SK-N-SH (cell line): ENCODE measurements at regions of chr2 and their contacts with region 1.

Region 1: DNA sequence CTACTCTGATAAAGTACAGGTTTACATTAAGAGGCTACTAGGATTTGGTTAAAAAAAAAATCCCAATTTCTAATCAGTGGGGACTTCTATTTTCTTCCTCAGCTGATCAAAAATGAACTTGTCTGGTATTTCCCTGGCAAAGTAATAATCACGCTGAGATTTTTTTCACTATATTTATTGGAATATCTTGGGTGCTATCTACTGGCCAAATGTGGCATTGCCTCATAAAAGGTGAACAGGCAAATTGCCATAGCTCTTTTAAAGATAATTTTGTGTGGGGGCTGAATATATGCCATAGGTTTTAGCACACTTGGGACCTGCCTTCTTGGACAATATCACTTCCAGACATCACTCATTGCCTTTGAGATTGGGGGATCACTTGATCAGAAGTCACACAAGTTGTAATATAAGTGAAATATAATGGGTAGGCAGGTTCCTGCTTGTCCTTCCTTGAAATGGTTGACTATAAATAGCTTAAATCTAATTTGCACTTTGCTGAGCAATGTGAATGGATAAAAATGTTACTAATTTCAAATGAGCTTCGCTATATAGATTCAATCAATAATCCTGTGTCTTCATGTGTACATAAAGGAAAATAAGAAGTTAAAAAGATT is 7.0 kb upstream of the NXPH2 start:
- DNase-seq: peak; percentile 49
- H3K4me3 ChIP-seq: peak overlapping the region in 1 of 2 experiments; percentile 30; a peak in 1 of 4 replicates
- H3K27ac ChIP-seq: no peak overlapping the region
- H3K4me1 ChIP-seq: no peaks in the 10 kb centered on the region
- H3K27me3 ChIP-seq: no peaks in the 10 kb centered on the region; the same call in 1 of the 2 replicates
- CTCF ChIP-seq: peak; percentile 83
- EP300 ChIP-seq: no peak
- RAD21 ChIP-seq: peak; percentile 90

Region 2: DNA sequence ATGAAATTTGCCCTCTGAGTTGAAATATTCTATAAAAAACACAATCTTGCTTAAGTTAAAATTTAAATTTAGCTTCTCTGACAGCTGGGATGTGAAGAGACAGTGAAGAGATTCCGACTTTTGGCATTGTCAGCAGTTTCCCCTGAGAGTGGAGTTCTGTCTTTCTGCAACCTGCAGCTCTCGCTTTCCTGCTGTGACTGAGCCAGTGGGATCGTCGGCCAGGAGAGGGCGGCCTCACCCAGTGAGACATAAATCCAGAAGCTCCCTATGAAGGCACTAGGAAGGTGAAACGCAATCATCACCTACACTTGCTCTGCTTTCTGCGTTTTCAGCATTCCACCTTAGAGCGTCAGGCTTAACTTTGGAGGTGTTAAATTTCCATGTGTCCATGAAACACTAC is 898.3 kb before region 1 on chr2:
- CTCF ChIA-PET with region 1: interaction called, 35 read pairs
- POLR2A ChIA-PET with region 1: no interaction called
- DNase-seq: peak; percentile 25
- H3K4me3 ChIP-seq: no peak overlapping the region; a peak in 1 of 4 replicates
- H3K27ac ChIP-seq: no peak overlapping the region
- H3K4me1 ChIP-seq: no peaks in the 10 kb centered on the region
- H3K27me3 ChIP-seq: no peaks in the 10 kb centered on the region
- CTCF ChIP-seq: peak; percentile 45; the same call in 1 of the 2 replicates
- EP300 ChIP-seq: no peak
- RAD21 ChIP-seq: peak; percentile 62

Region 3: DNA sequence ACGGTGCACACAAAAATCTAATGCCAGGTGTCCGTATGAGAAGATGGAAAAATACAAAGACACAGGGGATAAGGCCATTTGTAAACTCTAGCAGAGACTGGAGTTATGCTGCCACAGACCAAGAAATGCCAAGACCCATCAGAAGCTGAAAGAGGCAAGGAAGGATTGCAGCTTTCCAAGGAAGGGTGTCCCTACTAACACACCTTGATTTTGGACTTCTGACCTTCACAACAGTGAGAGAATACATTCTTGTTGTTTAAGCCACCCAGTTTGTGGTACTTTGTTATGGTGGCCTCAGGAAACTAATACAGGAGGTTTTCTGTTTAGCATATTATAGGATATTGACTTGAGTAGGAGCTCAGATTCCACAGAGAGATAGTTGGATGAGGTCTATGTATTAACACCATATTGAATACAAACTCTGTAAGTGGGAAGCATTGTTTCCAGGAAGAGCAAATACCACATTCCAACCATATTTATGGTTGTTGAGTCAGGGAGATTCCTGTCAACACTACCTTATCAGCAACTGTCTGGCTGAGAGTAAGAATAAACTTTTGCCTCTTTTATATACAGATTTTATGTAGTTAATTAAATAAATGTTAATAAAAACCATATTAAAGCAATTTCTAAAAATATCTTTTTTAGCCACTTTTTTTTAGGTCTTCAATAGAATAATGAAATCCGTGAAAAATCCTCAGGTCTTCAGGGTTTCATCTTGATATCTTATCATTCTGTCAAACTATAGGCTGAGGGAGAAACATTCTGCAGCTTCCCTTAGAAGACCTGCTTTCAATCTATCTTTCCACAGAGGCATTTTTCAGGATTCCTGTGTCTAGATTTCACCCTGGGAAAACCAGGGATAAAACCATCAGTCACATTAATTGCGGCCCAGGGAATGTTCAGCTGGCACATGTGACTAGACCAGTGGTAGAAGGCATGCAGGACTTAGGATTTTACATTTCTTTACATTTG is 858.3 kb before region 1 on chr2:
- CTCF ChIA-PET with region 1: interaction called, 10 read pairs
- POLR2A ChIA-PET with region 1: no interaction called
- DNase-seq: peak; percentile 1
- H3K4me3 ChIP-seq: no peak overlapping the region
- H3K27ac ChIP-seq: peak overlapping the region; percentile 49 to 89; a peak in 3 of 4 replicates
- H3K4me1 ChIP-seq: peaks cover 0 to 2% of the 10 kb centered on the region in 2 experiments; a peak in 1 of 4 replicates
- H3K27me3 ChIP-seq: no peaks in the 10 kb centered on the region
- CTCF ChIP-seq: no peak
- EP300 ChIP-seq: peak in 1 of 2 experiments; percentile 65; a peak in 1 of 4 replicates
- RAD21 ChIP-seq: no peak

Region 4: GRCh38 chr2:138373993-138374408 is 413.2 kb before region 1 on chr2:
- CTCF ChIA-PET with region 1: interaction called, 15 read pairs
- POLR2A ChIA-PET with region 1: no interaction called
- DNase-seq: peak; percentile 36
- H3K4me3 ChIP-seq: no peak overlapping the region
- H3K27ac ChIP-seq: no peak overlapping the region
- H3K4me1 ChIP-seq: no peaks in the 10 kb centered on the region; a peak in 1 of 4 replicates
- H3K27me3 ChIP-seq: no peaks in the 10 kb centered on the region
- CTCF ChIP-seq: peak; percentile 92
- EP300 ChIP-seq: no peak
- RAD21 ChIP-seq: peak; percentile 81

Region 5: GRCh38 chr2:138827426-138828054 is 40.4 kb after region 1 on chr2:
- CTCF ChIA-PET with region 1: interaction called, 42 read pairs
- POLR2A ChIA-PET with region 1: no interaction called
- DNase-seq: peak; percentile 18
- H3K4me3 ChIP-seq: no peak overlapping the region
- H3K27ac ChIP-seq: no peak overlapping the region
- H3K4me1 ChIP-seq: peaks cover 0 to 2% of the 10 kb centered on the region in 2 experiments; a peak in 1 of 4 replicates
- H3K27me3 ChIP-seq: no peaks in the 10 kb centered on the region
- CTCF ChIP-seq: peak; percentile 84
- EP300 ChIP-seq: no peak
- RAD21 ChIP-seq: peak; percentile 86

Region 6: DNA sequence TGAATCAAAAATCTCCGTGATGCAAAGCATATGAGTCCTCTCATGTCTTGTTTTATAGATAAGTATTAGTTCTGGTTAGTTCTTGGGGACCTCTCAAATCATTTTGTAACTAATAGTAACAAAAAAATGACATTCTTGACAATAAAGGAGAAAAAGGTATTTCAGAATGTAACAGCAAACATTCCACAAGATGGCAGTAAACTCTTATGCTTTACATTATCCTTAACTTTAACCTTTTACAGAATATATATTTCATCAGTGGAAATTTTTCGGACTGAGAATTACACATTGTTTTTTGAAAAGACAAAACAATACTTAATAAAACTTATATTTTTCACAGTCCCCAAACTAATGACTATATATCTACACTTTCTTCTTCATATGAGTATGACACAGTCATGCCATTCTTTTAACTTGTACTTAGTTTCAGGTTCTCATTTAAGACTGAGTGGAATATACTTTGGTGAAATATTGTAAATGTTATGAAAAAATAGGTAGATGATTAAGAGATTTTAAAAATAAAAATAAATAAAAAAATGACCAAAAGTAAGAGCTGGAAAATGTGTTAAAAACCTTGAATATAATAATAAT is 135.9 kb after region 1 on chr2:
- CTCF ChIA-PET with region 1: no interaction called
- POLR2A ChIA-PET with region 1: no interaction called
- DNase-seq: peak; percentile 11
- H3K4me3 ChIP-seq: no peak overlapping the region; a peak in 1 of 4 replicates
- H3K27ac ChIP-seq: no peak overlapping the region
- H3K4me1 ChIP-seq: peaks cover 0 to 2% of the 10 kb centered on the region in 2 experiments; a peak in 2 of 4 replicates
- H3K27me3 ChIP-seq: no peaks in the 10 kb centered on the region; the same call in 1 of the 2 replicates
- CTCF ChIP-seq: peak; percentile 70
- EP300 ChIP-seq: no peak
- RAD21 ChIP-seq: peak; percentile 78